Panc1 (cell line): ENCODE measurements at regions of chr6 and their contacts with region 1.

Region 1: DNA sequence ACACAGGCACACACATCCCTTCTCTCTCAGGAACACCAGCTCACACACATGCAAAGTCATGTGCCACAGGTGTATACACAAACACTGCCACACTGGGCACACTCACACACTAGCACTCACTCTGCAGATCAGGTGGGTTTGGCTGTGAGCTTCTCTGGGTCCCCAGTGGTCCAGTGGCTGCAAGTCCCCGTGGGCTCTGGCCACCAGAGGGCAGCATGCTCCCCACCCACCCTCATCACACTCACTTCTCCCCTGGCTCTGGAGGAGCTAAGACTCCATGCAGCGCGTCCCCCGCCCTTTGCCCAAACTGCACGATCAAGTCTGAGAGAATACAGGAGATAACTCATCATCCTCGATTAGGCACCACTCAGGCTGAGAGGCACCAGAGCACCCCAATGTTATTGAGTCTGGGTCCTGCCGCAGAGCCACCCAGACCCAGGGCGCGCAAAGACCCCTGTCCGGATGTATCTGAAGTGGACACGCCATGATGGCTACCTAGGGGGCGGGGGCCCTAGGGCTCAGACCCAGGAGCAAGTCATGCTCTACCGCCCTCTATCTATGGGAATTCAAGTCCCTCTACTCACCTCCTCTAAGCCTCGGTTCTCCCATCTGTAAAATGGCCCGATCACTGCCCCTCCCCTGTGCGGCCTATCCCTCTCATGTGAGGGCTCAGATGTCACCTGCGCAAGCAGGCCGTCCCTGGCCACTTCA is 90.5 kb downstream of the GRM4 start:
- DNase-seq: peak; percentile 35
- ATAC-seq: peak; percentile 92
- H3K4me3 ChIP-seq: no peak overlapping the region
- H3K27ac ChIP-seq: no peak overlapping the region
- H3K4me1 ChIP-seq: no peaks in the 10 kb centered on the region
- H3K27me3 ChIP-seq: no peaks in the 10 kb centered on the region
- CTCF ChIP-seq: peak; percentile 95

Region 2: GRCh38 chr6:33738153-33738552 is 317.2 kb before region 1 on chr6:
- CTCF ChIA-PET with region 1: interaction called, 10 read pairs
- POLR2A ChIA-PET with region 1: no interaction called
- in situ Hi-C with region 1: no loop called
- intact Hi-C with region 1: no loop called
- DNase-seq: no peak
- ATAC-seq: no peak
- H3K4me3 ChIP-seq: no peak overlapping the region
- H3K27ac ChIP-seq: no peak overlapping the region
- H3K4me1 ChIP-seq: no peaks in the 10 kb centered on the region
- H3K27me3 ChIP-seq: no peaks in the 10 kb centered on the region
- CTCF ChIP-seq: no peak

Region 3: GRCh38 chr6:34115403-34115795 is 60.0 kb after region 1 on chr6:
- CTCF ChIA-PET with region 1: interaction called, 11 read pairs
- POLR2A ChIA-PET with region 1: no interaction called
- in situ Hi-C with region 1: no loop called
- intact Hi-C with region 1: no loop called
- DNase-seq: no peak
- ATAC-seq: no peak
- H3K4me3 ChIP-seq: no peak overlapping the region
- H3K27ac ChIP-seq: no peak overlapping the region
- H3K4me1 ChIP-seq: no peaks in the 10 kb centered on the region
- H3K27me3 ChIP-seq: peaks cover 3% of the 10 kb centered on the region
- CTCF ChIP-seq: no peak

Region 4: GRCh38 chr6:34132486-34133185 is 77.3 kb after region 1 on chr6:
- CTCF ChIA-PET with region 1: no interaction called
- POLR2A ChIA-PET with region 1: no interaction called
- in situ Hi-C with region 1: no loop called
- intact Hi-C with region 1: no loop called
- DNase-seq: no peak
- ATAC-seq: no peak
- H3K4me3 ChIP-seq: no peak overlapping the region
- H3K27ac ChIP-seq: no peak overlapping the region
- H3K4me1 ChIP-seq: no peaks in the 10 kb centered on the region
- H3K27me3 ChIP-seq: no peaks in the 10 kb centered on the region
- CTCF ChIP-seq: no peak

Region 5: GRCh38 chr6:34154668-34155447 is 99.5 kb after region 1 on chr6:
- CTCF ChIA-PET with region 1: interaction called, 12 read pairs
- POLR2A ChIA-PET with region 1: no interaction called
- in situ Hi-C with region 1: no loop called
- intact Hi-C with region 1: loop called (anchors 2 kb)
- DNase-seq: no peak
- ATAC-seq: peak; percentile 86
- H3K4me3 ChIP-seq: peak overlapping the region; percentile 19 to 46
- H3K27ac ChIP-seq: no peak overlapping the region
- H3K4me1 ChIP-seq: no peaks in the 10 kb centered on the region
- H3K27me3 ChIP-seq: no peaks in the 10 kb centered on the region
- CTCF ChIP-seq: peak; percentile 99

Region 6: GRCh38 chr6:34301408-34301807 is 246.0 kb after region 1 on chr6:
- CTCF ChIA-PET with region 1: interaction called, 12 read pairs
- POLR2A ChIA-PET with region 1: no interaction called
- in situ Hi-C with region 1: no loop called
- intact Hi-C with region 1: no loop called
- DNase-seq: no peak
- ATAC-seq: no peak
- H3K4me3 ChIP-seq: no peak overlapping the region
- H3K27ac ChIP-seq: no peak overlapping the region
- H3K4me1 ChIP-seq: 0 out of 2 replicates have a peak, but pooled peaks cover 3% of the 10 kb centered on the region
- H3K27me3 ChIP-seq: no peaks in the 10 kb centered on the region
- CTCF ChIP-seq: no peak

Region 7: DNA sequence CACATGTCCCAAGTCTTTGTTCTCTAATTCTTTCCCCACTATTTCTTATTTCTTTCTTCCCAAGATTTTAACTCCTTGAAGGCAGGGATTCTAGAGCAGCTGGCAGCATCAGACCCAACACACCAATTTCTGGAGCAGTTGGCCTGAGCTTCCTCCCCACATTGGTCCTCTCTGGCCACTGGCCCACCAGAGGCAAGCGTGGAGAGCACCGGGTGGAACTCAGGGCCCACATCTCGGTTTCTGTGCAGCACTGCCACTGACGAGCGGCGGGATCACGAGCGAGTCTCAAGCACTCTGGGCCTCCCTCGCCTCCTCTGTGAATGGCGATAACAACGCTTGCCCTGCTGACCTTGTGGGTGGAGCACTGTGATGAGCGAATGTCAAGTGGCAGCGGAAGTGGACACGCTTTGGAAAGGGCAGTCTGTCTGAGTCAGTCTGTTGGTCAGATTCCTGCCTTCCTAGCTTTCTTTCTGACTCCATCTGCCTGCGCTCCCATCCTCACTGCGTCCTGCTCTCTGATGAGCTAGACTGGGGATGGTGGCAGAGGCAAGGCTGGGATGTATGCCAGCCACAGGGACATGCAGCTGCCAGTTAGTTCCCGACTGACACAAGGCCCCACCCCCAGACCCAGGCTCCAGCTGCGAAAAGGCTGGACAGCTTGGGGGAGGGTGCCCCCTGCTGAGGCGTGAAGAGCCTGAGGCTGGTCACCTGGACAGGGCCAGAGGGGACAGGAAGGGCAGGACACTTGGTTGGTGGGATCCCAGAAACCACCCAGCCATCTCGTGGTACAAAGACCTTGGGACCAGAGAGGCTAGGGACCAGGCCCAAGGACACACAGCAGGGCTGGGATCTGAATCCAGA is 505.2 kb after region 1 on chr6:
- CTCF ChIA-PET with region 1: no interaction called
- POLR2A ChIA-PET with region 1: no interaction called
- in situ Hi-C with region 1: no loop called
- intact Hi-C with region 1: no loop called
- DNase-seq: no peak
- ATAC-seq: no peak
- H3K4me3 ChIP-seq: no peak overlapping the region
- H3K27ac ChIP-seq: no peak overlapping the region
- H3K4me1 ChIP-seq: peaks cover 10% of the 10 kb centered on the region
- H3K27me3 ChIP-seq: no peaks in the 10 kb centered on the region
- CTCF ChIP-seq: no peak